Aorta (tissue), 5 donors: ENCODE measurements at regions of chr1 and their contacts with region 1.

Region 1: DNA sequence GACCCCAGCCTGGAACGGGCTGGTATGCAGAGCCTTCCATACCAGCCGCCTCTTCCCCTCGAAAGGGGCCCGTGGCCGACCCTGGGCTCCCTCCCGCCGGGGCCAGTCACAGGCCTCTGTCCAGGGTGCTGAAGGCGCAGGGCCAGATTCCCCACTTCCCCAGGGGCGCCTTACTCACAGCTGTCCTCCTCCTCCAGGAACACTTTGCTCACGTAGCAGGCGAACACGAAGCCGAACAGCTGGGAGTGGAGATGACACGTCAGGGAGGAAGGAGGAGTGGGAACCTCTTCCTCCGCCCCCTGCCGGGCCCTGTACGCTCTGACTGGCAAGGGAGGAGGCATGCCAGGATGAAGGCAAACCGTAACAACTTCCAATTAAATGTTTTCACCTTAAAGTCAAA is 57.3 kb downstream of the NKAIN1 start:
- DNase-seq: peak; percentile 83 to 95
- ATAC-seq: peak; percentile 85
- H3K4me3 ChIP-seq: no peak overlapping the region
- H3K27ac ChIP-seq: no peak overlapping the region
- H3K4me1 ChIP-seq: no peaks in the 10 kb centered on the region
- H3K27me3 ChIP-seq: no peaks in the 10 kb centered on the region

Region 2: DNA sequence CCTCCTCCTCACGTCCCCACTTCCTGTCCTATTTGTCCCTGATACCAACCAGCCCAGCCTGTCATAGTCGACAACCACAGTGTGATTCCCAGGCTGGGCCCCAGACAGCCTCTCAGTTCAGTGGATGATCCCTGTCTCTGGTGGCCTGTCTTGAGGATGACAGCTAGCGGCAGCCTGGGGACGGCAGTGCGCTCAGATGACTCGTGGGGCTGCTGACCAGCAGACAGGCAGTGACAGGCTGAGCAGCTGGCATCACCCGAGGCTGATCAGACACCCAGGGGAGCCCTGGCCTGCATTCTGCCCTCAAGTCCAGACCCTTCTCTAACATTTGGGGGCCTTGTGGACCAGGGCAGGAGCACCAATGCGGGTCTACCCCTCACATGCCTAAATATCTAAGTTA is 36.4 kb after region 1 on chr1:
- intact Hi-C with region 1: no loop called
- DNase-seq: no peak
- ATAC-seq: no peak
- H3K4me3 ChIP-seq: no peak overlapping the region
- H3K27ac ChIP-seq: no peak overlapping the region
- H3K4me1 ChIP-seq: no peaks in the 10 kb centered on the region
- H3K27me3 ChIP-seq: no peaks in the 10 kb centered on the region

Region 3: GRCh38 chr1:31422505-31423319 is 240.4 kb after region 1 on chr1:
- intact Hi-C with region 1: loop called (anchors 2 kb)
- DNase-seq: peak; percentile 72 to 87
- ATAC-seq: peak; percentile 82
- H3K4me3 ChIP-seq: no peak overlapping the region
- H3K27ac ChIP-seq: no peak overlapping the region
- H3K4me1 ChIP-seq: no peaks in the 10 kb centered on the region
- H3K27me3 ChIP-seq: no peaks in the 10 kb centered on the region

Region 4: GRCh38 chr1:31444725-31445448 is 262.5 kb after region 1 on chr1:
- intact Hi-C with region 1: no loop called
- DNase-seq: no peak
- ATAC-seq: no peak
- H3K4me3 ChIP-seq: no peak overlapping the region
- H3K27ac ChIP-seq: no peak overlapping the region
- H3K4me1 ChIP-seq: no peaks in the 10 kb centered on the region
- H3K27me3 ChIP-seq: no peaks in the 10 kb centered on the region

Region 5: DNA sequence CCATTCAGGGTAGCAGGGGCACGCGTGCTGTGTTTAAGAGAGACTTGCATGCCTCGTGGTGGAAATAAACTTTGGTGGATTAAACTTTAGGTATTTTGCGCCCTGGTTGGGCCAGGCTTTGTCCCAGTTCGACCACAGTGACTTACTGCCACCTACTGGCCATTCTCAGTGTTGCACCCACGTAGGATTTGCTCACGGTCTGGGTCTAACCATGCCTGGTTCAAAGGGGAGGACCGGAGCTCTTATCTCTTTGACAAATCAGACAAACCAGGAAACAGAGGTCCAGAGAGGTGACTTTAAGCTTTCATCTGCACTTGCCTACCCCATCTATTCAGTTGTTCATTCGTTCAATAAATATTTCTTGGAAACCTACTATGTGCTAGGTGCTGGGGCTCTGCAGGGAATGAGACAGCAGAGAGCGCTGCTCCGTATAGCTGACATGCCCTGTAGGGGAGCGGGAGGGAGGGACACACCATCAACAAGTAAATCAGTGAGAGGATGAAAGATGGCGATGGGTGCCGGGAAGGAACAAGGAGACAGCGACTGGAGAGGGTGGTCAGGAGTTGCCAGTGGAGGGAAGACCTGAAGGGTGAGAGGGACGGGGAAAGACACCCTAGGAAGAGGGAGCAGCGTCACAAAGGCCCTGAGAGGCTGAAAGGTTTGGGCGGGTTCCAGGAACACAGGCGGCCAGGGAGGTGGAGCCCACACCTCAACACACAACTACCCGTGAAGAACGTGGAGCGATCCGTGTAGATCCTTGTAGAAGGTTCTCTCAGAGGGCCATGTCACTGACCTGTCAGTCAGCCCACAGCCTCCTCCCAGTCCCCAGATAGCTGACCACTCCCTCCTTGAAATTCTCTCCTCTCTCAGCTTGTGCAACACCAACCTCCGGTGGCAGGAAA is 366.8 kb after region 1 on chr1:
- intact Hi-C with region 1: loop called (anchors 10 kb)
- DNase-seq: peak; percentile 89 to 91
- ATAC-seq: peak; percentile 94
- H3K4me3 ChIP-seq: no peak overlapping the region
- H3K27ac ChIP-seq: no peak overlapping the region
- H3K4me1 ChIP-seq: no peaks in the 10 kb centered on the region
- H3K27me3 ChIP-seq: no peaks in the 10 kb centered on the region